ENCODE measurements at regions of chr2 and their contacts with region 1.

Region 1: DNA sequence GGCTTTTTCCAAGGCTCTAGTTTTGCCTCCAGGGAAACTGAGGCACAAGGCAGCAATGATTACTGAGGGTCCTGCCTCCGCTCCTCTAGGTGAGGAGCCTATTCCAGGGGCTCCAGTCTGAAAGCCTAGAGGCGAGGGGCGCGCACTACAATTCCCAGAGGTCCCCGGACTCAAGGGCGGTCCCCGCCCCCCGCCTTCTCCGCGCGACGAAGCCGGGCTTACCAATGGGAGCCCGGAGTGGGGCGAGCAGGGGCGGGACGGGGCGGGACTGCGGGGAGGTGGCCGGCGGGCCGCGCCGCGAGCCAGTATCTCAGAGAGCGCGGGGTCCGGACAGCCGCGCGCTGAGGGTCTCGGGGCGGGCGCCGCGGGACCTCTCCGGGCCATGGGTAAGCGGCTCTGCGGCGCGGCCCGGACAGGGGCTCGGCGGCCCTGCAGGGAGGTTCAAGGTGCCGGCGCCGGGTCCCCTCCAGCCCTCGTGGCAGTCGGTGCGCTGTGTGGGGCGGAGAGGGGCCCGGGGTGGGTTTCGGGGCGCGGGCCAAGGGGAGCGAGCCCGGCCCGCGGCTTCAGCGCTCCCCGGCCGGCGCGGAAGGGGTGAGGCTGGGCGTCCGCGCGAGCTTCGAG is at the start of gene ARID5A:
- DNase-seq: peak; percentile 92
- ATAC-seq: peak; percentile 71
- H3K4me3 ChIP-seq: peak within 1 kb of the TSS; percentile 28 to 85 (median 76)
- H3K4me3 Mint-ChIP-seq: peak within 1 kb of the TSS; percentile 83
- H3K27ac ChIP-seq: peak within 1 kb of the TSS; percentile 81 to 94
- H3K27ac Mint-ChIP-seq: peak within 1 kb of the TSS; percentile 97
- H3K4me1 ChIP-seq: peaks cover 38 to 55% of the 10 kb centered on the region in 2 donors
- H3K4me1 Mint-ChIP-seq: peaks cover 44% of the 10 kb centered on the region
- H3K27me3 ChIP-seq: no peaks in the 10 kb centered on the region
- H3K27me3 Mint-ChIP-seq: no peaks in the 10 kb centered on the region
- CTCF ChIP-seq: peak; percentile 45
- total RNA-seq, gene ARID5A: 93.0 and 100 TPM in 2 replicates

Region 2: GRCh38 chr2:96145036-96145847 is 391.3 kb before region 1 on chr2 and contains the start of gene DUSP2:
- CTCF ChIA-PET with region 1: no interaction called
- POLR2A ChIA-PET with region 1: interaction called, 4 read pairs
- intact Hi-C with region 1: loop called (anchors 1 kb)
- DNase-seq: peak; percentile 95
- ATAC-seq: peak; percentile 56
- H3K4me3 ChIP-seq: peak within 1 kb of the TSS; percentile 42 to 71 (median 59)
- H3K4me3 Mint-ChIP-seq: peak within 1 kb of the TSS; percentile 92
- H3K27ac ChIP-seq: peak within 1 kb of the TSS; percentile 95 to 97
- H3K27ac Mint-ChIP-seq: peak within 1 kb of the TSS; percentile 98
- H3K4me1 ChIP-seq: peaks cover 53 to 66% of the 10 kb centered on the region in 2 donors
- H3K4me1 Mint-ChIP-seq: peaks cover 69% of the 10 kb centered on the region
- H3K27me3 ChIP-seq: no peaks in the 10 kb centered on the region
- H3K27me3 Mint-ChIP-seq: no peaks in the 10 kb centered on the region
- CTCF ChIP-seq: no peak
- total RNA-seq, gene DUSP2: 69.8 and 74.9 TPM in 2 replicates

Region 3: GRCh38 chr2:96485751-96486651 is 50.6 kb before region 1 on chr2:
- CTCF ChIA-PET with region 1: no interaction called
- POLR2A ChIA-PET with region 1: no interaction called
- intact Hi-C with region 1: no loop called
- DNase-seq: peak; percentile 87
- ATAC-seq: peak; percentile 86
- H3K4me3 ChIP-seq: peak overlapping the region in 4 of 5 experiments; percentile 47 to 59 (median 57)
- H3K4me3 Mint-ChIP-seq: peak overlapping the region; percentile 93
- H3K27ac ChIP-seq: peak overlapping the region; percentile 59 to 72
- H3K27ac Mint-ChIP-seq: peak overlapping the region; percentile 93
- H3K4me1 ChIP-seq: peaks cover 10 to 15% of the 10 kb centered on the region in 2 donors
- H3K4me1 Mint-ChIP-seq: peaks cover 22% of the 10 kb centered on the region
- H3K27me3 ChIP-seq: peaks cover 0 to 3% (median 0%) of the 10 kb centered on the region in 4 experiments
- H3K27me3 Mint-ChIP-seq: no peaks in the 10 kb centered on the region
- CTCF ChIP-seq: no peak

Region 4: GRCh38 chr2:96509114-96509846 is 27.3 kb before region 1 on chr2:
- CTCF ChIA-PET with region 1: interaction called, 8 read pairs
- POLR2A ChIA-PET with region 1: interaction called, 9 read pairs
- intact Hi-C with region 1: loop called (anchors 1 kb)
- DNase-seq: peak; percentile 78
- ATAC-seq: peak; percentile 67
- H3K4me3 ChIP-seq: no peak overlapping the region
- H3K4me3 Mint-ChIP-seq: peak overlapping the region; percentile 78
- H3K27ac ChIP-seq: no peak overlapping the region
- H3K27ac Mint-ChIP-seq: no peak overlapping the region
- H3K4me1 ChIP-seq: peaks cover 18 to 23% of the 10 kb centered on the region in 2 donors
- H3K4me1 Mint-ChIP-seq: peaks cover 18% of the 10 kb centered on the region
- H3K27me3 ChIP-seq: peaks cover 0 to 16% (median 0%) of the 10 kb centered on the region in 4 experiments
- H3K27me3 Mint-ChIP-seq: peaks cover 14% of the 10 kb centered on the region
- CTCF ChIP-seq: peak; percentile 75

Region 5: GRCh38 chr2:96638144-96639121 is 101.9 kb after region 1 on chr2 and contains the start of gene KANSL3:
- CTCF ChIA-PET with region 1: no interaction called
- POLR2A ChIA-PET with region 1: no interaction called
- intact Hi-C with region 1: loop called (anchors 2 kb)
- DNase-seq: peak; percentile 96
- ATAC-seq: peak; percentile 89
- H3K4me3 ChIP-seq: peak within 1 kb of the TSS; percentile 81 to 96 (median 88)
- H3K4me3 Mint-ChIP-seq: peak within 1 kb of the TSS; percentile 98
- H3K27ac ChIP-seq: peak within 1 kb of the TSS; percentile 57 to 88
- H3K27ac Mint-ChIP-seq: peak within 1 kb of the TSS; percentile 96
- H3K4me1 ChIP-seq: peaks cover 20 to 24% of the 10 kb centered on the region in 2 donors
- H3K4me1 Mint-ChIP-seq: peaks cover 42% of the 10 kb centered on the region
- H3K27me3 ChIP-seq: no peaks in the 10 kb centered on the region
- H3K27me3 Mint-ChIP-seq: peaks cover 4% of the 10 kb centered on the region
- CTCF ChIP-seq: no peak
- total RNA-seq, gene KANSL3: 55.4 and 56.9 TPM in 2 replicates

Region 6: GRCh38 chr2:96760036-96760985 is 223.8 kb after region 1 on chr2 and contains the start of gene CNNM4:
- CTCF ChIA-PET with region 1: interaction called, 7 read pairs
- POLR2A ChIA-PET with region 1: no interaction called
- intact Hi-C with region 1: loop called (anchors 5 kb)
- DNase-seq: peak; percentile 92
- ATAC-seq: peak; percentile 88
- H3K4me3 ChIP-seq: peak within 1 kb of the TSS; percentile 76 to 93 (median 84)
- H3K4me3 Mint-ChIP-seq: peak within 1 kb of the TSS; percentile 95
- H3K27ac ChIP-seq: peak within 1 kb of the TSS; percentile 69 to 79
- H3K27ac Mint-ChIP-seq: peak within 1 kb of the TSS; percentile 95
- H3K4me1 ChIP-seq: peaks cover 46 to 57% of the 10 kb centered on the region in 2 donors
- H3K4me1 Mint-ChIP-seq: peaks cover 54% of the 10 kb centered on the region
- H3K27me3 ChIP-seq: no peaks in the 10 kb centered on the region
- H3K27me3 Mint-ChIP-seq: no peaks in the 10 kb centered on the region
- CTCF ChIP-seq: no peak
- total RNA-seq, gene CNNM4: 24.0 and 25.6 TPM in 2 replicates

Measured in B cell (primary cell).